ENCODE measurements at regions of chr19 and their contacts with region 1.

Region 1: GRCh38 chr19:43439097-43440063 is 24.7 kb downstream of the TEX101 start:
- DNase-seq: no peak
- H3K4me3 ChIP-seq: no peak overlapping the region
- H3K4me1 ChIP-seq: peaks cover 4% of the 10 kb centered on the region; the same call in 1 of the 2 replicates
- H3K27me3 ChIP-seq: no peaks in the 10 kb centered on the region

Region 2: DNA sequence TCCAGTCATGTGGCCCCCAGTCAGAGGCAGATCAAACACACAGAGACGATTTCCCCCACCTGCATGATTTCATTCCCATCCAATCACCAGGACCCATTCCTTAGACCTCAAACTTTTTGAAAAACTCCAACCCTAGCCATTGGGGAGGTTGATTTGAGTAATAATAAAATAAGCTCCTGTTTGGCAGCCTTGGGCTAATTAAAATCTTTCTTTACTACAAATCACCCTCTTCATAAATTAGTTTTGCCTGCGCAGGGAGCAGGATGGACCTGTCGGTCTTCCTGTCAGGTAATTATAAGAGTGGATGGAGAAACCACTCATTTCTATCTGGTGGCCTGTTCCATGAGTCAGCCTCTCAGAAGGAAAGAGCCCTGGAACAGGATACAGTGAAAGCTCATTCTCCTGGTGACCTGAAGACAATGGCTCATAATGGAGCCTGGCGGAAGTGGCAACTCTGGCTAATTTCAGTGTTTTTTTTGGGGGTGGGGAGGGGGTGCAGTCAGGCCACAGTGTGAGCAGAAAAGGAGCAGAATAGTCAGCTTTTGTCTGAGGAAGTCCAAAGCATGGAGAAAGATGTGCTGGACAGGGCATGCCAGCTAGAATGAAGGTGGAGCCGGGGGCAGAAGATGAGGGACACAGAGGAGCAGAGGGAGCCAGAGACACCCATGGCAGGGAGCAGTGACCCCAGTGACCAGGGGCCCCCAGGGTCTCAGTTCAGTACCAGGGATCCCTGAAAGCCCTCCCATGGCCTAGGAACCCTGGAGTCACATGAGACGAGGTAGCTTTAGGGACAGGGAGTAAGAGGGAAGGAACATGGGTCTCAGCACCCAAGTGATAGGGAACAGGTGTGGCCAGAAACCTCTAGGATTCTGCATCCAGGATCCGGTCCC is 138.3 kb before region 1 on chr19:
- in situ Hi-C with region 1: no loop called
- DNase-seq: no peak
- H3K4me3 ChIP-seq: no peak overlapping the region
- H3K4me1 ChIP-seq: no peaks in the 10 kb centered on the region
- H3K27me3 ChIP-seq: peaks cover 8% of the 10 kb centered on the region

Region 3: GRCh38 chr19:43316592-43317319 is 122.6 kb before region 1 on chr19:
- in situ Hi-C with region 1: no loop called
- DNase-seq: peak; percentile 19 to 65
- H3K4me3 ChIP-seq: no peak overlapping the region
- H3K4me1 ChIP-seq: peaks cover 23% of the 10 kb centered on the region
- H3K27me3 ChIP-seq: no peaks in the 10 kb centered on the region

Region 4: GRCh38 chr19:43519436-43520088 is 80.2 kb after region 1 on chr19:
- in situ Hi-C with region 1: no loop called
- DNase-seq: peak; percentile 81 to 88
- H3K4me3 ChIP-seq: no peak overlapping the region
- H3K4me1 ChIP-seq: no peaks in the 10 kb centered on the region
- H3K27me3 ChIP-seq: no peaks in the 10 kb centered on the region

Region 5: DNA sequence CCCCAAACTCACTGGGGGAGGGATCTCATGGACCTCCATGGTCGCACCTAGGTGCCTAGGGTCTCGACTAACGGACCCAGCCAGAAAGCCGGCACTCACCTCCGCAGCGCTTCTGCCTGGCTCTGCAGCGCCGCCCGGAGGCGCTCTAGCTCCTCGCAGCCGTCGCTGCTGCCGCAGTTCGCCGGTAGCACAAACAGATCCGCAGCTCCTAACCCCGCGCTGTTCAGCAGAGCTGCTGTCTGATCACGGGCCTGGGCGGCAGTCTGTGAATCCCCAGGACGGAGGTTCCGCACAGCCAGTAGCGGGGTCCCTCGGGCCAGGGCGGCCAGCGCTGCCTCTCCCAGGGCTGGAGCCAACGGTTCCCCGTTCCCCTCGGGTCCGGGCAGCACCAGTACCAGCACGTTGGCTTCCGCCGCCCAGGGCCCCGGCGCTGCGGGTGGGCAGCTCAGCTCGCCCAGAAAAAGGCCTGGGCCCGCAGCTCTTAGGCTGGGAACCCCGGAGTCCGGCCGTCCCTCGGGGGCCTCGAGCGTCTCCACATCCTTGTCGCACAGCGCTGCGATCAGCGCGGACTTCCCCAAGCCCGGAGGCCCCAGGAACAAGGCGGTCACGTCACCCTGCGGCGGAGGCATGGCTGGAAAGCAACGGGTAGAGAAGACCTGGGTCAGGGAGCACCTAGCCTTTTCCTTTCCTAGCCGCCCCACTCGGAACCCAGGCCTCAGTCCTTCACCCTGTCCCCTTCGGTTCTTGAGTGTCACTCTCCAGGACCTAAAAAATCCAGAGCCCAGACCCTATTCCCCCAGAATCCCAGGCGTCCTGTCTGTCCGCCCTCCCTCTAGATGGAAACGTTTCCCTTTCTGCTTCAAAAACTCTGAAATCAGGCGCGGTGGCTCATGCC is 155.6 kb after region 1 on chr19:
- in situ Hi-C with region 1: loop called (anchors 5 kb)
- DNase-seq: peak; percentile 58 to 76
- H3K4me3 ChIP-seq: peak overlapping the region; percentile 64
- H3K4me1 ChIP-seq: peaks cover 10% of the 10 kb centered on the region; the same call in 1 of the 2 replicates
- H3K27me3 ChIP-seq: no peaks in the 10 kb centered on the region

Region 6: GRCh38 chr19:43700395-43701000 is 261.1 kb after region 1 on chr19:
- in situ Hi-C with region 1: no loop called
- DNase-seq: peak in 1 of 2 experiments; percentile 22
- H3K4me3 ChIP-seq: no peak overlapping the region
- H3K4me1 ChIP-seq: peaks cover 11% of the 10 kb centered on the region
- H3K27me3 ChIP-seq: no peaks in the 10 kb centered on the region